ENCODE measurements at regions of chr7 and their contacts with region 1.

Region 1: DNA sequence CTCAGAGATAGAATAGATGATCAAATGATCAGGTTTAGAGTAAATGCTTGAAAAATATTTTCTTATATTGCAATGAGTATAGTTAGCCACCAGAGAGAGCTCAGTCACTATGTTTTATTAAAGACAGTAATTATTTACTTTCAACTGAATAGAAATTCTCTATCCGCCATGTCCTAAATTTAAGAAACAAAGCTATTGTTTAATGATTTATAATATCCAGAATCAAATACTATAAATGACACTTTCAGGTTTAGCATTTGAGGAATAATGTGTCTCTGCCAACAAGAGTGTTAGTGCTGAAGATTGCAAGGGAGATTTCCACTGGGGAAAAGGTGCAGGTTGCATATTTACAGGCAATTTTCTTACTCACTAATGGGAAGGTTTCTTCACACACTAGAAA is 184.7 kb downstream of the DGKB start:
- DNase-seq: peak; percentile 48
- H3K4me3 ChIP-seq: no peak overlapping the region
- H3K27ac ChIP-seq: no peak overlapping the region
- H3K4me1 ChIP-seq: peaks cover 7% of the 10 kb centered on the region
- H3K27me3 ChIP-seq: no peaks in the 10 kb centered on the region
- CTCF ChIP-seq: peak; percentile 21 to 30
- POLR2A ChIP-seq: no peak

Region 2: DNA sequence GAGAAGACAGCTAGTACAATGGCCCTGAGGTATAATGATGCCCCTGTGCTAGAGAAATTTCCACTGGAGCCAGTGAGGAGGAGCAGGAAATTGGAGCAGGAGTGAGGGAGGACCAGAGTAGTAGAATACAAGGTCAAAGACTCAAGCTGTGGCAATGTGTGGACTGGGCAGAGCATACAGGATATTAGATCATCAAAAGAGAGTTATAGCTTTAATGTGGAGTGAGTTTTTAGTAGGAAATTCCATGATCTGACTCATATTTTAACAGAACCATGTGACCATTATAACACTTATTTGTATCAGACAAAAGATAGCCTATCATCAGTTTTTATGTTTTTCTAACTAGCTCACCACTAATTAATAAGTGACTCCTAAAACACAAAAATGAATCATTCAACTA is 30.6 kb after region 1 on chr7:
- CTCF ChIA-PET with region 1: interaction called, 13 read pairs
- POLR2A ChIA-PET with region 1: no interaction called
- dilution Hi-C with region 1: no loop called
- intact Hi-C with region 1: no loop called
- DNase-seq: peak; percentile 95
- H3K4me3 ChIP-seq: no peak overlapping the region
- H3K27ac ChIP-seq: peak overlapping the region; percentile 60
- H3K4me1 ChIP-seq: peaks cover 28% of the 10 kb centered on the region
- H3K27me3 ChIP-seq: no peaks in the 10 kb centered on the region
- CTCF ChIP-seq: no peak
- POLR2A ChIP-seq: peak; percentile 34

Region 3: DNA sequence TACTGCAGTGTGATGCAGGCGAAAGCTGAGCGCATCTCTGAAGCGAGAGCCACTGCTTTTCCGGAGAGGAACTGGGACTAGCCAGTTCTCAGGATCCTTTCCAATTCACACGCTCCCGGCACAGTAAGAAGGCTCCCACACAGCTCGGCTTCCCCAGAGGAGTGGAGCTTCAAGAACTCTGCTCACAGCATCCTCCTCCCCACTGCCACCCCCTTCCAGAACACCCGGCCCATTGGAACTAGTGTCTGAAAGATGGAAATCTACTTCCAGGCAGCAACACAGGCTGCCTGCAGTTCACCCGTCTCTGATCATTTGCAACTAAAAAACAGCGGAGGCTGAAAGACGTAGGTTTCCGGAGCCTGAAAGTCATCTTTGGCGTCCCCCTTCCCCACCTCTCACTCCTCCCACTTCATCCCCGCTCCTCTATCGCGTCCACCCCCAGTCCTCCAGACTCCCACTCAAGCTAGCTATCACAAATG is 184.8 kb after region 1 on chr7 and contains the start of gene DGKB:
- CTCF ChIA-PET with region 1: interaction called, 9 read pairs
- POLR2A ChIA-PET with region 1: no interaction called
- dilution Hi-C with region 1: no loop called
- intact Hi-C with region 1: loop called (anchors 5 kb)
- DNase-seq: peak; percentile 41
- H3K4me3 ChIP-seq: peak within 1 kb of the TSS; percentile 1 to 41 (median 17)
- H3K27ac ChIP-seq: no peak within 1 kb of the TSS
- H3K4me1 ChIP-seq: peaks cover 4% of the 10 kb centered on the region
- H3K27me3 ChIP-seq: peaks cover 0 to 5% of the 10 kb centered on the region in 2 experiments
- CTCF ChIP-seq: no peak
- POLR2A ChIP-seq: no peak
- total RNA-seq, gene DGKB: 0.44 TPM in 1 of 2 replicates, not detected in the other

Region 4: DNA sequence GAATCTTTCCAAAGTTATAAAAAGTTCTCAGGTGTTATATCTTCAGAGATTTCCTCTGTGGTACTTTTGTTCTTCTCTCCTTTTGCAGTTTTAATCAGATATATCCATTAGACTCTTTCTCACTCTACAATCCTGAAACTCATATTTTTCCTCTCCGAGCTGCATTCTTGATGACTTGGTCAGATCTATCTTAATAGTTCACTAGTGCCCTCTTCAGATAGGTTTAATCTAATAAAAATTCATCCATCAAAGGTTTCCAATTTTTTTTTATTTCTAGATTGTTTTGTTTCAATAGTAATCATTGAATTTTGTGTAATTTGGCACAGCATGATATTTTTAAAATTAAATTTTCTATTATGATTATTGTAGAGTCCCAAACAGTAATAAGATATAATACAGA is 206.6 kb after region 1 on chr7:
- CTCF ChIA-PET with region 1: interaction called, 45 read pairs
- POLR2A ChIA-PET with region 1: no interaction called
- dilution Hi-C with region 1: no loop called
- intact Hi-C with region 1: loop called (anchors 1 kb)
- DNase-seq: no peak
- H3K4me3 ChIP-seq: no peak overlapping the region
- H3K27ac ChIP-seq: no peak overlapping the region
- H3K4me1 ChIP-seq: no peaks in the 10 kb centered on the region
- H3K27me3 ChIP-seq: no peaks in the 10 kb centered on the region
- CTCF ChIP-seq: no peak
- POLR2A ChIP-seq: no peak

Region 5: DNA sequence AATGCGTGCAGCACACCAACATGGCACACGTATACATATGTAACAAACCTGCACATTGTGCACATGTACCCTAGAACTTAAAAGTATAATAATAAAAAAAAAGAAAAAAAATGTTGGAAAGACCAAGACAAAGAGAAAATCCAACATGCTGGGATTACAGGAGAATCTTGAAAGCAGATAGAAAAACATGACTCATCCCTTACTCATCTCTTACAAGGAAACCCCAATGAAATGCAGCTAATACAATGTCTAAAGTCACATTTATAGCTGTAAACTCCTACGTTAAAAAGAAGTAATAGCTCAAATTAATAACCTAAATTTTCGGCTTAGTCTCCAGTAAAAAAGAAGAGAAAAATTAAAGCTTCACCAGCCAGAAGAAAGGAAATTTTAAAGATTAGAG is 232.2 kb after region 1 on chr7:
- CTCF ChIA-PET with region 1: no interaction called
- POLR2A ChIA-PET with region 1: no interaction called
- dilution Hi-C with region 1: no loop called
- intact Hi-C with region 1: no loop called
- DNase-seq: no peak
- H3K4me3 ChIP-seq: no peak overlapping the region
- H3K27ac ChIP-seq: no peak overlapping the region
- H3K4me1 ChIP-seq: no peaks in the 10 kb centered on the region
- H3K27me3 ChIP-seq: no peaks in the 10 kb centered on the region
- CTCF ChIP-seq: no peak
- POLR2A ChIP-seq: no peak

Region 6: GRCh38 chr7:15007507-15007906 is 289.7 kb after region 1 on chr7:
- CTCF ChIA-PET with region 1: interaction called, 357 read pairs
- POLR2A ChIA-PET with region 1: no interaction called
- dilution Hi-C with region 1: no loop called
- intact Hi-C with region 1: no loop called
- DNase-seq: peak; percentile 6
- H3K4me3 ChIP-seq: no peak overlapping the region
- H3K27ac ChIP-seq: no peak overlapping the region
- H3K4me1 ChIP-seq: no peaks in the 10 kb centered on the region
- H3K27me3 ChIP-seq: no peaks in the 10 kb centered on the region
- CTCF ChIP-seq: peak; percentile 14 to 46
- POLR2A ChIP-seq: no peak

Region 7: DNA sequence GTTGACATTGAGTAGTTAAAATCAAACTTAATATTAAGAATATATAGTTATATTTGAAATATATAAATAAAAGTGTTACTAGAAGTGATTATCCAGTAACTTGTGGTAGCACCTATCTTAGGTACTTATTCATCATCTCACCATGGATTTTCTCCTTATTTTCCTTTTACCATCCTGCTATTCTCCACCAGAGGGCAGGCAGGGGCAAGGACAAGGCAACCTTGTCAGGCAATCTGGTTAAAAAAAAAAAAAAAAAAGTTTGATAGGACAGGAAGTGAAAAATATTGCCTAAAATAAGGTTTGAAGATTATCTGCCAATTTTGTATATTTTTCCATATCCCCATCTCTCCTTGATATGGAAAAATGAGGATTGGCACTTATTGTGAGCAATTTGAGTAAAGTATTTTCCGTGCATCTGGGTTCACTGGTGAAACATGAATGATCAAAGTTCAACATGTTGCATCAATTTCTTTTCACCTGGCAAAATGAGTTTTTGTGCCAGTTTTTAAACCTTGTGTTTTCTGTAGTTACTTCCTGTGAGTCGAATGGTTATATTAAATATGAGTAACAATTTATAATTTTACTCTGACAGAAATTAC is 587.3 kb after region 1 on chr7:
- CTCF ChIA-PET with region 1: interaction called, 7 read pairs
- POLR2A ChIA-PET with region 1: no interaction called
- dilution Hi-C with region 1: no loop called
- intact Hi-C with region 1: loop called (anchors 1 kb)
- DNase-seq: peak; percentile 65
- H3K4me3 ChIP-seq: no peak overlapping the region
- H3K27ac ChIP-seq: no peak overlapping the region
- H3K4me1 ChIP-seq: no peaks in the 10 kb centered on the region
- H3K27me3 ChIP-seq: no peaks in the 10 kb centered on the region
- CTCF ChIP-seq: peak; percentile 61 to 66
- POLR2A ChIP-seq: no peak

Region 8: DNA sequence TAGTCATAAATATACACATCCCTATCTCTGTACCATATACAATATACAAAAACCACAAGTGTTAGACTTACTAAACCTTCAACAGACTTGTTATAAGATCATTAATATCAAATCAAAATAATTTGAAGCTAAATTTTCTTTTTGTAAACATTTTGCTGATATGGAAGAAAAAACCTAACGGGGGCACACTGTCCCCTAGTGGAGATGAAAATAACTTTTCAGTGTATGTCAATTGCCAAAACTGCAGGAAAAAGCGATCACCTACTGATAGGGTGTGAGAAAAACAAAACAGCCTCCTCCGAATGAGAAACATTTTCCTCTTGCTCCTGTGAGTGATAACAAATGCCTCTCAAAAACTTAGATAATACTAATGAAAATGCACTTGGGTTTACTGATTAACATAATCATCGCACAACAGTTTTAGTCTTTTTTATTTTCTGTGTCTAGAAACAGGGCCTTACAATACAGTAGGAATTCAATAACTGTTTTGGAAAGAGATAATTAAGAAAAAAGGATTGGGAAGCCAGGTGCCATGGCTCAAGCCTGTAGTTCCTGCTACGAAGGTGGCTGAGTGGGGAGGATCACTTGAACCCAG is 1380.9 kb after region 1 on chr7:
- CTCF ChIA-PET with region 1: interaction called, 13 read pairs
- POLR2A ChIA-PET with region 1: no interaction called
- dilution Hi-C with region 1: no loop called
- intact Hi-C with region 1: loop called (anchors 5 kb)
- DNase-seq: peak; percentile 85
- H3K4me3 ChIP-seq: no peak overlapping the region
- H3K27ac ChIP-seq: peak overlapping the region; percentile 86
- H3K4me1 ChIP-seq: peaks cover 22% of the 10 kb centered on the region
- H3K27me3 ChIP-seq: no peaks in the 10 kb centered on the region
- CTCF ChIP-seq: peak; percentile 64 to 70
- POLR2A ChIP-seq: no peak

Measured in endothelial cell of umbilical vein (primary cell).